ENCODE measurements at regions of chr11 and their contacts with region 1.

Region 1: DNA sequence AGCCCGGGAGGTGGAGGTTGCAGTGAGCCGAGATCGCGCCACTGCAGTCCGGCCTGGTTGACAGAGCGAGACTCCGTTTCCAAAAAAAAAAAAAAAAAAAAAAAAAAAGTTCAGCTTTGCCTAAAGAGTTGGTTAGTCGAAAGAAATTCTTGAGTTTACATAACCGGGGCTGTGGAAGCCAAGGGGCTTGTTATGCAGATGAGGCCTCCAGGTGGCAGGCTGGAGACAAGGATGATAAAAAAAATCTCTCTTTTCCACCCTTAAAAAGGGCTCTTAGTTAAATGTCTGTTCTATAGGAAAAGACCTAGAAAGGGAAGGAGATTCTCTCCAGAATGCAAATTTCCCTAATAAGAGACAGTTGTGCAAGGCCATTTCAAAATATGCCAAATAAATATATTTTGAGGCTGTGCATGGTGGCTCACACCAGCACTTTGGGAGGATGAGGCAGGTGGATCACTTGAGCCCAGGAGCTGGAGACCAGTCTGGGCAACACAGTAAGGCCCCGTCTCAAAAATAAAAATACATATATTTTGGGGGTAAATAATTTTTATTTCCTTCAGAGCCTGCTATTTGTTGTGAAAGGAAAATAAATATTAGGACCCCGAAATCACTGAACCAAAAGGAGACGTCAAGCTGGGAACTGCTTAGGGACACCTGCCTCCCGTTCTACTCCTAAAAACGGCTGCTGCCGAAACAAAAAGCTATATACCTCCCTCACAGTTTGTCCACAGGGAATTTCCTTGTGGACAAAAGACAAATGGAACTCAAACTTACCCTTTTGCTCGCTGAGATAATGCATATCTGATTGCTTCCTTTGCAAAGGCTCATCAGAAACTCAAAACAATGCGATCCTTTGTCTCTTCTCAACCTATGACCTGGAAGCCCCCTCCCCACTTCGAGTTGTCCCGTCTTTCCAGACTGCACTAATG is 2.4 kb upstream of the IFITM2 start:
- H3K4me3 ChIP-seq: no peak overlapping the region
- H3K27ac ChIP-seq: no peak overlapping the region
- H3K4me1 ChIP-seq: no peaks in the 10 kb centered on the region
- CTCF ChIP-seq: no peak

Region 2: DNA sequence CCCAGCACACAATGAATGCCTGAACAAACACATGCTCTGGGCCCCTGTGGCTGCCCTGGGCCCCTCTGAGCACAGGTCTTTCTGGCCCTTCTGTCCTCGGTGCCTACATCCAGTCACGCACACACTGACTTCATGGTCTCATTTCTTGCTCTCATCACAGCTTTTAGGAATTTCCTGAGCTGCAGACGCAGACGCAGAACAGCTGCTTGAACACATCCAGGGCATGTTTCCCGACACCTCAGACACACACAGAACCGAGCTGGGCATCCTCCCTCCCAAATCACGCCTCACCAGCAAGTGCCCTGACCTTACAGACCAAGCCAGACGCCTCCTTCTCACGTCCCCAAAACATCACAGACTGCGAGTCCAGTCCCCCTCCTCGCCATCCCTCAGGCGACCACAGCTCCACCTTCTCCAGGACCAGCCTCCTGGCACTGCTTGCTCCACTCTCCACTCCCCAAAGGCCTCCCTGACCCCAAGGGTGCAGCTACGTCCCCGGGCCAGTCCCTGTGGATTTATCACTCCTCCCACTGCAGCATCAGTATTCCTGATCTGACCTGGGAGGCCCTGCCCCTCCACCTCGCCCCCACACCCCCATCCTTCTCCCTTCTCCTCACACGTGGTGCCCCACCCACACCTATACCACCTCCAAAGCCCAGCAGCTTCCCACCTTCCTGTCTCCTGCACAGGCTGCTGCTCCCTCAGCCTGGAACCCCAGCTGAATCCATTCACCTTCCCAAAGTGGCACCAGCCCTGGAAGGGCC is 82.0 kb before region 1 on chr11:
- CTCF ChIA-PET with region 1: no interaction called
- POLR2A ChIA-PET with region 1: no interaction called
- H3K4me3 ChIP-seq: no peak overlapping the region
- H3K27ac ChIP-seq: no peak overlapping the region
- H3K4me1 ChIP-seq: no peaks in the 10 kb centered on the region
- CTCF ChIP-seq: no peak

Region 3: DNA sequence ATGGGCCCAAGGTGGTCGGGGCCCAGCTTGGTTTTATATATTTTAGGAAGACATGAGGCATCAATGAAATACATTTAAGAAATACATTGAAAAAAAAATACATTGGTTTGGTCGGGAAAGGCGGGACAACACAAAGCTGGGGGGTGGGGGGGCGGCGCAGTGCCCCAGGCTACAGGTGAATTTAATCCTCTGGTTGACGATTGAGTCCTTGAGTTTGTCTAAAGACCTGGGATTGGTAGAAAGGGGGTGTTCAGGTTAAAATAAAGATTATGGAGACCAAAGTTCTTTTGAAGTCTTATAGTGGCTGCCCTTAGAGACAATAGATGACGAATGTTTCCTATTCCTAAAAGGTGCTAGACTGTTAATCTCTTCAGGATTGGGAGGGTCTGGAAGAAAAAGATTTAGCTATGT is 11.7 kb after region 1 on chr11:
- CTCF ChIA-PET with region 1: interaction called, 11 read pairs
- POLR2A ChIA-PET with region 1: interaction called, 3 read pairs
- H3K4me3 ChIP-seq: no peak overlapping the region
- H3K27ac ChIP-seq: no peak overlapping the region
- H3K4me1 ChIP-seq: no peaks in the 10 kb centered on the region
- CTCF ChIP-seq: no peak

Region 4: GRCh38 chr11:355581-356458 is 50.6 kb after region 1 on chr11:
- CTCF ChIA-PET with region 1: interaction called, 13 read pairs
- POLR2A ChIA-PET with region 1: interaction called, 3 read pairs
- H3K4me3 ChIP-seq: peak overlapping the region; percentile 47
- H3K27ac ChIP-seq: peak overlapping the region; percentile 57; the same call in 1 of the 2 replicates
- H3K4me1 ChIP-seq: no peaks in the 10 kb centered on the region
- CTCF ChIP-seq: no peak

Region 5: GRCh38 chr11:477052-477715 is 172.0 kb after region 1 on chr11:
- CTCF ChIA-PET with region 1: no interaction called
- POLR2A ChIA-PET with region 1: no interaction called
- H3K4me3 ChIP-seq: no peak overlapping the region
- H3K27ac ChIP-seq: no peak overlapping the region
- H3K4me1 ChIP-seq: no peaks in the 10 kb centered on the region
- CTCF ChIP-seq: no peak

Measured in HEK293 (cell line).